Cardiac septum (tissue), 1 donor: ENCODE measurements at regions of chr2 and their contacts with region 1.

Region 1: DNA sequence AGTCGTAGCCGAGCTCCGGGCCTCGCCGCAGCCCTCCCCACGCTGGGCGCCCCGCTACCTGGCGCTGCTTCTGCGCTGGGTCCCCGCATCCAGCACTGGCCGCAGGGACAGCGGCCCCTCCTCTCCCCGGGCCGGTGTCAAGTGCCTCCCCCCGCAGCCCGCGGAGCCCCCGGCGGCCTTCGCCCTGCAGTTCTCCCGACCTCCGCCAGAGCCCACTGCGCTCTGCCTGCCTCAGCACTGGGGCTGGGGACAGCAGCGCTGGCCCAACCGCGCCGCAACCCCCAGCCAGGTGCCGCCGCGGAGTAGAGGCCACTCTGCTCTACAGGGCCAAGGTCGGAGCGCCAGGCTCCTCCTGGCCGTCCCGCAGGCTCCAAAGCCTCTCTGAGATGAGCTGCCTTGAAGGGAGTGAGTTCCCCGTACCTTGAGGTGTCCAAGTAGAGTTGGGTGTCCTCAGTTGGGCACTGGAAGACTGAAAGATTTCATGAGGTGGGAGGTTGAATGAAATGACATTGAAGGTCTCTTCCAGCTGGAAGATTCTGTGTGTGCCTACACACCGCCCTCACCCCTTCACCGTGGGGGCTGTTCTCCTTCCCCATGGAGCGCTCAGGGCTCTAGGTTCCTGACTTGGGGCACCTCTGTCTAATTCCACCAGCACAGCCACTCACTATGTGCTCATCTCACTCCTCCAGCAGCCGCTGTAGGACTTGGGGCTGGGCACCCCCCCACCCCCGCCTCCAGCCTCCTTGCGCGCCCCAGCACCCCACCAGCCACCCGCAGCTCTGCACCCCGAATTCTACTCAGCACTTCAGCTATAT is 854 bp upstream of the DNMT3A start:
- DNase-seq: peak; percentile 93

Region 2: GRCh38 chr2:25276569-25277465 is 65.8 kb before region 1 on chr2:
- intact Hi-C with region 1: loop called (anchors 5 kb)
- DNase-seq: peak; percentile 86

Region 3: DNA sequence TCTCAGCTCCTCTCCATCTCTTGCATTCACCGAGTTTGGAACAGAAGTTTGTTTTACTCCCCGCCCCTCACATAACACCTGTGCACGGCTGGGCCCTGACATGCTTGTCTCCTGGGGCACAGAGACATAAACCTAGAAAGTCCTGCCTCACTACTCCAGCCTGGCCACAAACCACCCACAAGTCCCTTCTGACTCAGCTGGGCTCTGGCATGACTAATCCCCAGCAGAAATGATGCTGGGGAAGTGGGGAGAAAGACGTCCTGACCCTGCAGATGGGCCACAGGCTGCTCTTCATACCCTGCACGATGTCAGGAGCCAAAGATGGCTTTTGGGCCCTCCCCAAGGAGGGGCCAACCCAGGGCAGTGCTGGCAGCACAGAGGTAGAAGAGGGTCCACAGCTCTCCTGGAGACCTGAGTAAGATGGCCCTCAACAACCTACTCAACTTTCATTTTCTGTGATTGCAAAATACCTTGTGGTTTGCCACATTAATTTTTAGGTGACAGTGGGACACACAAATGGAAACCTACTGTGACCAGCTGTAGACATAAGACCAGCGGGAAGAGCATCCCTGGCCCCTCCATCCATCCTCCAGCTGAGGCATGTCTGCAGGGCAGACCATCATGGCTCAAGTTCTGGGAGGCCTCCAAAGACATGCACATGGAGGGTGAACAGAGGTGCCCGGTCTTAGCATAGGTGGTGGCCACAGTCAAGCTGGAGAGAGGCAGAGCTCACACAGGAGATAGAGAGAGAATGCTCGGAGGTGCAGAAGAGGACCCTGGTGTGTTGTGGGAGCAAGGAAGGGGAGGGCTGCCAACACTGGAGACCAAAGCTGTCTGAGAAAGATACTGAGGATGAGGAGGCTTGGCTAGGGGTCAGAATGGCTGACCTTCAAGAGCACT is 40.9 kb before region 1 on chr2:
- intact Hi-C with region 1: loop called (anchors 5 kb)
- DNase-seq: no peak

Region 4: DNA sequence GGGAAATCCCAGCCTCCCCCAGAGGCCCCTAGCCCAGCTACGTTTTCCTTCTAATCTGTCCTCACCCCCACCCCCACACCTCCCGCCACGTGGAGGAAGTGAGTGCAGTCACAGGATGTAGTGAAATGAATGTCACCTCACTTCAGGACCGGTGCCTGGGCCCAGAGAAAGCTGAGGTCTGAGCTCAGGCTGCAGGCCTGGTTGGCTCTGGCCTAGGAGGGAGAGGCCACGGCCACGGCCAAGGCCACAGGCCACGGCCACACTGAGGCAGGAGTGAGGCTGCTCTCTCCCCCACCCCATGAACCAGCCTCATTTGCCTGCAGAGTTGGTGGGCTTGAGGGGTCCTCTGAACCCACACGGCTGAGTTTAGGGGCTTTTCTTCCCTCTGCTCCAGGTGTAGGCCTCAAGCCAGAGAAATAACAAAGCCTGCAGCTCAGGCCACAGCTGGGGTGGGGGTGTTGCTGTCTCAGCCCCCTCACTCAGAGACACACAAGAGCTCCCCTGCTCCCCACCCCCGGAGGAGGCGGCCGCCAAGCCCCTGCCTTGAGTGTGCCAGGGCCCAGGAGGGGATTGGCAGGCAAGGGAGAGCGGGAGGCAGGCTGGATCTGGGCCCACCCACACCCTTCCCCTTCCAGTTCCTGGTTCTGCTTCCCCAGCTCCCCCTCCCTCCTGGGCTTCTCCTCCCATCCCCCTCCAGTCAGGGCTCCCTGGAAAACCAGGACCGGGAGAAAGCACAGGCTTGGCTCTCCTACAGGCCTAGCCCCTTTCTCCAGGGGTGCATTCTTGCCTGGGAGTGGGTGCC is 27.9 kb before region 1 on chr2:
- intact Hi-C with region 1: loop called (anchors 2 kb)
- DNase-seq: peak; percentile 86

Region 5: DNA sequence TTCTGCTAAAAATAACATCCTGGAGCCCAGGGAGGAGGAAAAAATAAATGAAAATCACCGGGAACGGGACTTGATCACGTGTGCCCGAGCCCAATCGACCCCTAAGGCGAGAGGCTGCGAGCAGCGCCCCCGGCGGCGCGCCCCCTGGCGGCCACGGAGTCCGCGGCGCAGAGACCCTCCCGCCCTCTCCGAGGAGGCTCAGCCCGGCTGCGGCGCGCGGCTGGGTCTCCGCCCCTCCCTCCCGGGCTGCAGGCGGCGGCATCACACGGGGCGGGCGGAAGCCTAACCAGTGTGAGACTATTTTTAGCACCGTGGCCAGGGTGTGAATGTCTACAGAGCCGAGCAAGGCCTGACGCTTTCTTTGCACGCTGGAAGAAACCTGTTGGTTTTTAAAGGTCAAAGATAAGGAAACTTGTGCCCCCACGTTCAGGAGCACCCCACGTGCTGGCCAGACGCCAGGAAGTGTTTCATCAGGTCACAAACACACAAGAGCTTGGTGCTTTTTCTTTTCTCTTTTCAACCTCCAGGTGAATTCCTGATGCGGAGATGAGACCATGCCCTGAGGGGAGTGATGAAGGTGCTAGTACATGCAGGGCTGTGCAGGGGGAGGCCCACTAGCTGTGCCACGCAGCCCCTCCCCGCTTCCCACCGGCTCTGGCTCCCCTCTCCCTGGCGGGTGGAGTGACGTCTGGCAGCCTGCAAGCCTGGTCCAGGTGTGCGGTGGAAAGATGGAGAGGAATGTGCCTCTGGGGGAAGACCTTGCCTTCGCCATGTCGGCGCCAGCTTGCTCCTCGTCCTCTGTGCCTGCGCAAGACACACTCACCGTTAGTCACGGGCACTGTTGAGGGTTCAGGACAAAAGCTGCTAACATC is 34.4 kb after region 1 on chr2:
- intact Hi-C with region 1: loop called (anchors 2 kb)
- DNase-seq: peak; percentile 92

Region 6: DNA sequence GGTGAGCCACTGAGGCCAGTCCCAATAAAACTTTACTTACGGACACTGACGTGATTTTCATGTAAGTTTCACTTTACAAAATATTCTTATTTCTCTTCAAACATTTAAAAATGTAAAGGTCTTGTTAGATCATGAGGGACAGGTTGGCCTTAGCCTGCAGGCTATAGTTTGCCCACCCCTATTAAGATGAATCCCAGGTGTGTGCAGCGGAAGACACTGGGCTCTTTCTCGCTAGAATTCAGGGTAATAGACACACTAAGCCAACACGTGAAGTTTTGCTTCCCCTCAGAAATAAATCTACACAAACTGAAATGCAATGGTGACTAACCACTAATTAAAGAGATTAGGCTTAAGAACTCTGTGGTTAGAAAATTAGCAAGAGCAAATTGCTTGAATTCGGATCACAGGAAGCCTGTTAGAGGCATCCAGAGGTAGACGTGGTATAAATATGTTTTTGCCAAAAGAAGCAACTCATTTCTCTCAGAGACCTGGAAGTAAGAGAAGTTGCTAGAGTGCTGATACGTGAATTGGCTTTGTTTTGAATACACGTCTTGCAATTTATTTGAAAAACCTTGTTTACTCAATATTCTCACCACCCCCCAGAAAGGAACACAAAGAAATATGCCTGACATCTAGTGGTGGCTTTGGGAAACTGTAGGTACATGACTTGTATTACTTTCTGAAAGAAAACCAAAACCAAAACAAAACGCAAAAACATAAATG is 179.2 kb after region 1 on chr2:
- intact Hi-C with region 1: loop called (anchors 5 kb)
- DNase-seq: no peak